Activated CD4-positive, alpha-beta T cell treated with anti-CD3 and anti-CD28 coated beads for 36 hours (primary cell): ENCODE measurements at regions of chr3 and their contacts with region 1.

Region 1: GRCh38 chr3:42502429-42503250 is at the start of gene VIPR1:
- DNase-seq: peak; percentile 96
- ATAC-seq: peak; percentile 95
- H3K4me3 Mint-ChIP-seq: peak within 1 kb of the TSS; percentile 83
- H3K27ac Mint-ChIP-seq: peak within 1 kb of the TSS; percentile 71
- H3K4me1 Mint-ChIP-seq: peaks cover 46% of the 10 kb centered on the region
- H3K27me3 Mint-ChIP-seq: peaks cover 16% of the 10 kb centered on the region
- total RNA-seq, gene VIPR1: 6.6 to 6.7 TPM

Region 2: DNA sequence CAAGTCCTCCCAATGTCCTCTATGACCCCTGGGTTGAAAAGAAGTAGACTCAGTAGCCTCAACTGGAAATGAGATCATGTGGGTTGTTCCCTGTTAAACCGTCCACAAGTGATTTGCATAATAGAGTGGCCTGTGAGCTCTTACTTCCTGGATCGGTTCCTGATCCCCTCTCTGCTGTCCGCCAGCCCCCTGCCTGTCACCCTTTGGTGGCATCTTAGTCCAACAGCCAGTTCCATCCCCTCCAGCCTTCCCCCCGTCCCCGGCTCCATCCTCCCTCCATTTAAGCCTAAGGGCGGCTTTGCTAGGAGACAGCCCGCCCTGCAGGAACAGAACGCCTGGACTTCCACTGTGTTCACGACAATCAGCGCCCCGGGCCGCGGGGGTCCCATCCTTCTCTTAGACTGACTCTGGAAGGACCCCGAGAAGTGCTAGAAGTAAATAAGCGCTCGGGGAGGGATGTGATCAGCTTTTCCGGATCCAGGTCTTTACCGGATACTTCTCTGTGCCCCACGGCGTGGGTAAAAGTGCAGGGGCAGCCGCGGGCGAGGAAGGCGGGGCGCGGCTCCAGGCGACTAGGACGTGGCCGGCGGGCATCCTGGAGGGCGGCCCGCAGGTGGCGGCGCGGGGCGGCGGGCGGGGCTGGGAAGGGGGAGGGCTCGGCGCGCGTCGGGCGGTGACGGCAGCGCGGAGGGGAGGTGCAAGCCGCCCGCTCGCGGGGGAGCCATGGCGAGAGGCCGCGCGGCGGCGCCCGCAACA is 489.5 kb before region 1 on chr3:
- CTCF ChIA-PET with region 1: no interaction called
- POLR2A ChIA-PET with region 1: no interaction called
- intact Hi-C with region 1: loop called in 1 of 2 experiments (anchors 5 kb)
- DNase-seq: peak; percentile 88
- ATAC-seq: peak; percentile 75
- H3K4me3 Mint-ChIP-seq: peak overlapping the region; percentile 90
- H3K27ac Mint-ChIP-seq: peak overlapping the region; percentile 92
- H3K4me1 Mint-ChIP-seq: peaks cover 46% of the 10 kb centered on the region
- H3K27me3 Mint-ChIP-seq: no peaks in the 10 kb centered on the region

Region 3: GRCh38 chr3:42539869-42540714 is 37.5 kb after region 1 on chr3:
- CTCF ChIA-PET with region 1: interaction called, 51 read pairs
- POLR2A ChIA-PET with region 1: no interaction called
- intact Hi-C with region 1: loop called (anchors 1 kb)
- DNase-seq: peak; percentile 78
- ATAC-seq: peak; percentile 73
- H3K4me3 Mint-ChIP-seq: no peak overlapping the region
- H3K27ac Mint-ChIP-seq: no peak overlapping the region
- H3K4me1 Mint-ChIP-seq: peaks cover 4% of the 10 kb centered on the region
- H3K27me3 Mint-ChIP-seq: no peaks in the 10 kb centered on the region

Region 4: DNA sequence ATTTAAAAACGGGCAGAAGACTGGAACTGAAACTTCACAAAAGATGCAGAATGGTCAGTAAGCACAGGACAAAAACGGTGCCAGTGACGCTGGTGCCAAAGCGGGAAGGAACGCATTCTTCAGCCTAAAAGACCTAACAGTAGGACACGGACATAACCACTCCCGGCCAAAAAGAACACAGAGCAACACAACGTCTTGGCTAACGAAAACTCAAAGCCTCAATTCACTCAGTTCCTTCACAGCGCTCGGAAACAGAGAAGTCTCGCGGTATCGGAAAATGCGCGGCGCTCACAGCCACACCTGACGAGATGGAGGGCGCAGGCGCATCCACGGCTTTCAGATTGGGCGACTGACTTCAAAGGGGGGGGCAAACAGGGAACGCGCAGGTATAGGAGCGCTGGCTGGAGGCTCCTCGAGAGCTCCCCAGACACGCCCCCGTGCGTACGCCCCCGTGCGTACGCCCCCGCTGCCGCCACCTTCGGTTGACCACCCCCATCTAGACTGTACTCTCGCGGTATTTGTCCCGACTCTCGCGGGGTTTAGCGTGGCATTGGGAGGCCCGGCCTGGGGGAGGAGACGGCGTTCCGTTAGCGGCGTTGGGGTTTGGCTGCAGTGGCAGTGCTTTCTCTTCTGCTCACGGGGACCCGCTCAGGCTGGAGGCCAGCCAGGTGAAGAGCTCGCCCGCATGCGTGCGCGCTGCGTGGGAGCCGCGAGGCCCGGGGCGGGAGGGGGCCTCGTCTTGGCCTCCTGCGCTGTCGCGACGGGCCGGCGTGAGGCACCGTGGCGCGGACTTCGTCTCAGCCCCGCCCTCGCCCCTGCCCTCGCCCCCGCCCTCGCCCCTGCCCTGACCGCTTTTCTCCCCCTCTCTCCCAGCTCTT is 97.7 kb after region 1 on chr3 and contains the start of gene NKTR:
- CTCF ChIA-PET with region 1: no interaction called
- POLR2A ChIA-PET with region 1: interaction called, 3 read pairs
- intact Hi-C with region 1: loop called in 1 of 2 experiments (anchors 1 kb)
- DNase-seq: peak; percentile 100
- ATAC-seq: peak; percentile 91
- H3K4me3 Mint-ChIP-seq: peak within 1 kb of the TSS; percentile 80
- H3K27ac Mint-ChIP-seq: peak within 1 kb of the TSS; percentile 95
- H3K4me1 Mint-ChIP-seq: peaks cover 33% of the 10 kb centered on the region
- H3K27me3 Mint-ChIP-seq: no peaks in the 10 kb centered on the region
- total RNA-seq, gene NKTR: 50.8 to 59.2 TPM

Region 5: GRCh38 chr3:42772670-42773408 is 270.2 kb after region 1 on chr3 and contains the start of gene CCDC13:
- CTCF ChIA-PET with region 1: no interaction called
- POLR2A ChIA-PET with region 1: no interaction called
- intact Hi-C with region 1: loop called in 1 of 2 experiments (anchors 1 kb)
- DNase-seq: peak; percentile 96
- ATAC-seq: peak; percentile 96
- H3K4me3 Mint-ChIP-seq: peak within 1 kb of the TSS; percentile 83
- H3K27ac Mint-ChIP-seq: peak within 1 kb of the TSS; percentile 82
- H3K4me1 Mint-ChIP-seq: peaks cover 12% of the 10 kb centered on the region
- H3K27me3 Mint-ChIP-seq: no peaks in the 10 kb centered on the region
- total RNA-seq, gene CCDC13: 0.46 to 0.63 TPM

Region 6: GRCh38 chr3:43286115-43286840 is 783.6 kb after region 1 on chr3 and contains the start of gene SNRK:
- CTCF ChIA-PET with region 1: no interaction called
- POLR2A ChIA-PET with region 1: no interaction called
- intact Hi-C with region 1: loop called in 1 of 2 experiments (anchors 5 kb)
- DNase-seq: peak; percentile 95
- ATAC-seq: peak; percentile 77
- H3K4me3 Mint-ChIP-seq: peak within 1 kb of the TSS; percentile 94
- H3K27ac Mint-ChIP-seq: peak within 1 kb of the TSS; percentile 96
- H3K4me1 Mint-ChIP-seq: peaks cover 39% of the 10 kb centered on the region
- H3K27me3 Mint-ChIP-seq: no peaks in the 10 kb centered on the region
- total RNA-seq, gene SNRK: 19.5 to 22.9 TPM

Region 7: GRCh38 chr3:43442872-43443395 is 940.3 kb after region 1 on chr3:
- CTCF ChIA-PET with region 1: no interaction called
- POLR2A ChIA-PET with region 1: no interaction called
- intact Hi-C with region 1: no loop called
- DNase-seq: no peak
- ATAC-seq: no peak
- H3K4me3 Mint-ChIP-seq: no peak overlapping the region
- H3K27ac Mint-ChIP-seq: no peak overlapping the region
- H3K4me1 Mint-ChIP-seq: peaks cover 4% of the 10 kb centered on the region
- H3K27me3 Mint-ChIP-seq: no peaks in the 10 kb centered on the region